Head of caudate nucleus (tissue), 42 donors: ENCODE measurements at regions of chr1 and their contacts with region 1.

Region 1: GRCh38 chr1:7646981-7647901 is 123.9 kb upstream of the VAMP3 start:
- DNase-seq: peak in 40 of 42 donors; percentile 61 to 91 (median 82)

Region 2: DNA sequence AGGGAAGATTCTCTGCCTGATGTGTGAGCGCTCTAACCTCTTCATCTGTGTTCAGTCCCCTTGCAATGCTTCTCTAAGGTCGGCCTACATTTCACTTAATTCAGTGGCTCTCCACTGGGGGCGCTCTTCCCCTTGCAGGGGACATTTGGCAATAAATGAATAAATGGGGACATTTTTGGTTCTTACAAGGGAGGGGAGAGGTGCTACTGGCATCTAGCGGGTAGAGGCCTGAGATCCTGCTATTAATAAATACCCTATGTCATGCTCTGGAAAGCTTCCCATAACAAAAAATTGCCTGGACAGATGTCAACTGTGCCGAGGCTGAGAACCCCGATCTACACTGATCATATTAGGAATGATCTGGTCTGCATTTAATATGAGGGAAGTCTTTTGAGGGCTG is 919.7 kb before region 1 on chr1:
- intact Hi-C with region 1: loop called (anchors 10 kb)
- DNase-seq: peak in 40 of 42 donors; percentile 19 to 79 (median 52)

Region 3: DNA sequence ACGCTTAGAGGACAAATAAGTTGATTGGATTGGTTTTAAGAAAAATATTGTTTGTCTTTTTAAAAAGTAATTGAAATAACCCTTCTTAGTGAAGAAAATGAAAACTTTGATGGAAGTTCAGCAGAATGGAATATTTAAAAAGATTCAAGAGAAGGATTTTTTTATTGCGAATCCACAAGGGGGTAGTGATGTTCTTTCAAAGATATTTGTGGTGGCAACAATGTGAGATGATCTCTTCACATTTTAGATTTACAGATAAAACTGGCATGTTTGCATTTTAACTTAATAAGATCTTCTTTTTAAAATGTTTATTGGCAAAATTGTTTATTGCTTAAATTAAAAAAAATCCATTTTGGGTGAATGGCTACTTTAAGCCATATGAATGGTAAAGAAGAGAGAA is 853.1 kb before region 1 on chr1:
- intact Hi-C with region 1: loop called (anchors 5 kb)
- DNase-seq: peak in 1 of 42 donors; percentile 21

Region 4: DNA sequence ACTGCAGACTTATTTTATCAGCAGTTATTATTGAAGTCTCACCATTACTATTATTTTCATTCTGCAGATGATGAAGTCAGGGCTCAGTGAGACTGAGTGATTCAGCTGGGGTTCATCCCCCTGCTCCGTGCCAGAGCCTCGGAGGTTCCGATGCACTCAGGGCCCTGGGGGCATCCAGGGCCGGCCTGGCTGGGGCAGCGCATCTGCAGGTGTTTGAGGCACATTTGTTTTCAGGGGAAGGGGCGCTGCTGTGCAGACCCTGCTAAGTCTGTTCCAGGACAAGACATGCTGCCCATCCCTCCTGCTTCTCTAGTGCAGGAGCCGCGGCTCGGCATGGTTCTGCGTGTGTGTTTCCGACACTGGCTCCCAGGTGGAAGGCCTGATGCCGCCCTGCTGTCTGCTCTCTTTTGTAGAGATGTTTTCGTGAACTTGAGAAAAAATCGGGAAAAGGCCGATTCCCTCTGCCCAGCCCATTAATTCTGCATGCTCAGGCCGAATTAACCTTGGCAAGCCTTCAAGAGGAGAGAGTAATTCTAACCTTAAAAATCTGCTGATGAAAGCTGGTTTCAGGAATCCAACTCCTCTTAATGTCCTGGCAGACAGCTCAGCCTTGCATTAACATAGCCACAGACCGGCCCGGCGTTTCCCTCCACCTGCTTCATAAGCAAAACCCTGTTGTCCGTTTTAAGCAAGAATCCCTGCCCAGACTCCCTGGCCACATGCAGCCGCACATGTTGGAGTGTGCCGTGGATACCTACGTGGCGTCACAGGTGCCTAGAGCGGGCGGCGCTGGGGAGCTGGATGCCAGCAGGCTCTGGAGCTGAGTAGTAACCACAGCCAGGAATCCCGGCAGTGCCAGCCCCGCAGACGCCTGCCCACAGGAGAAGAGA is 192.1 kb before region 1 on chr1:
- intact Hi-C with region 1: loop called (anchors 5 kb)
- DNase-seq: peak in 17 of 42 donors; percentile 8 to 46 (median 24)